K562 (cell line): ENCODE measurements at regions of chr2 and their contacts with region 1.

Region 1: DNA sequence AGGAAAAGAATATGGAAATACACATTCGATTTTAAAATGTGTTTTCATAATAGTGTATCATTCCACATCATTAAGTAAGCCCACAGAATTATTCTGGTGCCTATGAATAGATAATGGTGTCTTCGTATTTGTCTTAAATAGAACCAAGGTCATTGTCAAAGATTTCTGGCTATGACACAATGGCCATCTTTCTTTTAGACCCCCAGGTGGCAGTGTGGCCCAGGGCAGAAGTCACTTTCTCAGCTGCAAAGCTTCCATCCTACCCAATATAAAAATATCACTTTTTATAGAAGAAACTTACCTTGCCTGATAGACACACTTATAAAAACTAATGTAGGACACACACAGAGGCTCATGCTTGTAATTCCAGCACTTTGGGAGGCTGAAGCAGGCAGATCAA is 57.5 kb downstream of the ZRANB3 start:
- DNase-seq: peak; percentile 17 to 42 (median 28)
- ATAC-seq: peak; percentile 91
- H3K4me3 ChIP-seq: no peak overlapping the region
- H3K27ac ChIP-seq: no peak overlapping the region
- H3K4me1 ChIP-seq: no peaks in the 10 kb centered on the region
- H3K27me3 ChIP-seq: no peaks in the 10 kb centered on the region
- CTCF ChIP-seq: peak; percentile 51 to 76 (median 64)
- EP300 ChIP-seq: no peak
- POLR2A ChIP-seq: no peak
- RAD21 ChIP-seq: peak; percentile 37 to 70; a peak in 3 of 4 replicates

Region 2: GRCh38 chr2:135456431-135456830 is 17.1 kb before region 1 on chr2:
- CTCF ChIA-PET with region 1: no interaction called
- POLR2A ChIA-PET with region 1: no interaction called
- in situ Hi-C with region 1: no loop called
- intact Hi-C with region 1: no loop called
- DNase-seq: no peak
- ATAC-seq: no peak
- H3K4me3 ChIP-seq: no peak overlapping the region
- H3K27ac ChIP-seq: no peak overlapping the region
- H3K4me1 ChIP-seq: no peaks in the 10 kb centered on the region
- H3K27me3 ChIP-seq: no peaks in the 10 kb centered on the region
- CTCF ChIP-seq: no peak
- EP300 ChIP-seq: no peak
- POLR2A ChIP-seq: no peak
- RAD21 ChIP-seq: no peak

Region 3: DNA sequence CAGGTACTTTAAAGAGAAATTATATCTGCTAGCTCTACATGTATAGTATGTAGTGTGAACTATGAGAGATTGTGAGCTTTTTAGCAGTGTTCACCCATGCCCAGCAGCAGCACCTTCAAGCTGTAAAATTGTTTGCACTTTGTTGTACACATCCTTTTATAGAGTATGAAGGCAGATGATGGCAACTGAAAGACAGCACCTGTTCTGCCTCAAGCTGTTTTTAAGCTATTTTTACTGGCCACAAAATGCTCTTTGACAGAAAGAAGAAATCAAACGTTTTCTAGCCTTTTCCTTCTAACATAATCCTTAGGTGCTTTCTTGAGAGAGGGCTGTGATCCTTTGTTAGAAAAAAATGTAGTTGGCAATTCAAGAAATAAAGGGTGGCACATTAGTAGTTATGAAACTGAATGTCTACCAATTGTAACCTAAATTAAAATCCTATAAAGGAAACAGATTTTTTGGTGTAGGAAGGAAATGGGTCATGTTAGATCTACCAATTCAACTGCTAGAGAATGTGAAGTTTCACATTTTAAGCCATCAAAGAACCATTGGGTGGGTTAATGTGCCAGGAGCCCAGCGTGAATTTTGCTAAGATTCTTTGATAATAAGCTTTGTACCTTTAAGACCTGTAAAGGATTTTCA is 117.2 kb after region 1 on chr2:
- CTCF ChIA-PET with region 1: no interaction called
- POLR2A ChIA-PET with region 1: no interaction called
- in situ Hi-C with region 1: loop called (anchors 10 kb)
- intact Hi-C with region 1: no loop called
- DNase-seq: no peak
- ATAC-seq: no peak
- H3K4me3 ChIP-seq: no peak overlapping the region
- H3K27ac ChIP-seq: no peak overlapping the region
- H3K4me1 ChIP-seq: peaks cover 0 to 6% of the 10 kb centered on the region in 2 experiments; a peak in 2 of 5 replicates
- H3K27me3 ChIP-seq: no peaks in the 10 kb centered on the region
- CTCF ChIP-seq: no peak
- EP300 ChIP-seq: no peak
- POLR2A ChIP-seq: no peak
- RAD21 ChIP-seq: no peak

Region 4: DNA sequence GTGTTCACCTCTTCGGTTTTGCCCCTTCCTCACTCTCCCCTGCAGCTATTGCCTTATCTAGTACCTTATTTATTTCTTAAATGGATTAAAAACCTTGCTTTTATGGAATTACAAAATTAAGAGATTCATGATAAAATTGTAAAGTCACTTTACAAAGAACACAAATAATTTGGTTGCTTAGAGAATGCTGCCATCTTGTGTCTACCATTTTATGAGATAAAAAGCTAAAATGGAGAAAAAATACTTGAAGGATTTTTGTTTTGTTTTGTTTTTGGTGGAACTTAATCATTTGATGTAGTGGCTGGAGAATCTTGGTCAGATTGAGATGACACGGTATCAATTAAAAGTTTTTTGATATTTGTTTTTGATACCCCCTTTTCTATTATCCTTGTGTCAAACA is 127.3 kb after region 1 on chr2:
- CTCF ChIA-PET with region 1: interaction called, 7 read pairs
- POLR2A ChIA-PET with region 1: no interaction called
- in situ Hi-C with region 1: loop called (anchors 10 kb)
- intact Hi-C with region 1: loop called (anchors 1 kb)
- DNase-seq: no peak
- ATAC-seq: no peak
- H3K4me3 ChIP-seq: no peak overlapping the region
- H3K27ac ChIP-seq: no peak overlapping the region
- H3K4me1 ChIP-seq: no peaks in the 10 kb centered on the region
- H3K27me3 ChIP-seq: no peaks in the 10 kb centered on the region
- CTCF ChIP-seq: peak in 2 of 3 experiments; percentile 5 to 49; a peak in 3 of 6 replicates
- EP300 ChIP-seq: no peak
- POLR2A ChIP-seq: no peak
- RAD21 ChIP-seq: peak; percentile 51 to 55

Region 5: DNA sequence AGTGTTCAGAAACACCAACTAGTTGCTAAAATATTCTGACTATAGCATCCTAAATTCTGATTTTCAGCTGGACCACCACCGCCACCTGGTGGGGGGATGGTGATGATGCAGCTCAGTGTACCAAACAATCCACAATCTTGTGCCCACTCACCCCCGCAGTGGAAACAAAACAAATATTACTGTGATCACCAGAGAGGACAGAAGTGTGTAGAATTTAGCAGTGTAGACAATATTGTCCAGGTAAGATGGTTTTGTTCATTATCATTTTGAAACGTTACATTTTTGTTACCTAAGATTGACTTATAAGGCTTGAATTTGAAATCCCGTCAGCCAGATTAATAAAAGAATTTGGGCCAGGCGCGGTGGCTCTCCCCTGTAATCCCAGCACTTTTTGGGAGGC is 236.4 kb after region 1 on chr2:
- CTCF ChIA-PET with region 1: interaction called, 5 read pairs
- POLR2A ChIA-PET with region 1: interaction called, 4 read pairs
- in situ Hi-C with region 1: loop called (anchors 5 kb)
- intact Hi-C with region 1: loop called (anchors 1 kb)
- DNase-seq: peak; percentile 60 to 70 (median 66)
- ATAC-seq: peak; percentile 90
- H3K4me3 ChIP-seq: no peak overlapping the region
- H3K27ac ChIP-seq: no peak overlapping the region
- H3K4me1 ChIP-seq: no peaks in the 10 kb centered on the region
- H3K27me3 ChIP-seq: no peaks in the 10 kb centered on the region
- CTCF ChIP-seq: peak; percentile 72 to 92 (median 87)
- EP300 ChIP-seq: no peak
- POLR2A ChIP-seq: no peak
- RAD21 ChIP-seq: peak; percentile 76 to 81

Region 6: DNA sequence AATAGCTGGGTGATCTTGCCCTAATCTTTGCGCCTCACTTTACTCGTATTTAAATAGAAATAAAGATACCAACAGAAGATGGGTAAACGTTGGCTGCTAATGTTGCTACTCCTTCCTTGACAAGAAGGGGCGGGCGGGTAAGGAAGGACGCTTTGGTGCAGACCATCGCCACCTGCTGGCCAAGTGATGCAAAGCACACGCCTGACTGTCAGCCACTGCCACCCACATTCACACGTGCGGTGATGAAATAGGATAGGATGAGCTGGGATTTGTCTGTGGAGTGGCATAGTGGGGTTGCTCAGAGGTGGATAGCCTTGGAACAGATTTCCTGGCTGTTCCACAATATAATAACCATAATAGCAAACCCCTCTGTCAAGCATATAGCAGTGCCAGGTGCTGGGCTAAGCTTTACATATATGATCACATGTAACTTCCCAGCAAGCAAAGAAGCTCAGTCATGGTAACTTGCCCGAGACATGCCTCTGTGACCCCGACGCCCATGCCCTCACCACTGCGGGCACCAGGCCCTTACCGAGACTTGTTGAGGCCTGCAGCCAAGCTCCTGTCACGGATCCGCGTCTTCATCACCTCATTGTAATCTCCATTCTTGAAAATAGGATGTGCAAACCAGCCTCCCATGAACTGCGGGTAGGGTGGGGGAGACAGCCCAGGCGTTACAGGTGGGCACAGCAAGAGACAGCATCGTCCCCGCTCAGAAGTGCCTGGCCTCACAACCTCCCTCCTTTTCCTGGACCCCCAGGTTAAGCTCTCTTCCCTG is 324.1 kb after region 1 on chr2:
- CTCF ChIA-PET with region 1: no interaction called
- POLR2A ChIA-PET with region 1: no interaction called
- in situ Hi-C with region 1: no loop called
- intact Hi-C with region 1: loop called (anchors 5 kb)
- DNase-seq: peak; percentile 81 to 86 (median 82)
- ATAC-seq: peak; percentile 94
- H3K4me3 ChIP-seq: no peak overlapping the region
- H3K27ac ChIP-seq: no peak overlapping the region
- H3K4me1 ChIP-seq: no peaks in the 10 kb centered on the region; a peak in 2 of 5 replicates
- H3K27me3 ChIP-seq: no peaks in the 10 kb centered on the region
- CTCF ChIP-seq: peak; percentile 94 to 97 (median 96)
- EP300 ChIP-seq: no peak
- POLR2A ChIP-seq: no peak
- RAD21 ChIP-seq: peak; percentile 48 to 77